Dendritic cell treated with granulocyte-macrophage colony-stimulating factor and Interleukin-4, amounts not matched to agents 40 ng/mL and 50 ng/mL, for 4 days (primary cell): ENCODE measurements at regions of chr19 and their contacts with region 1.

Region 1: DNA sequence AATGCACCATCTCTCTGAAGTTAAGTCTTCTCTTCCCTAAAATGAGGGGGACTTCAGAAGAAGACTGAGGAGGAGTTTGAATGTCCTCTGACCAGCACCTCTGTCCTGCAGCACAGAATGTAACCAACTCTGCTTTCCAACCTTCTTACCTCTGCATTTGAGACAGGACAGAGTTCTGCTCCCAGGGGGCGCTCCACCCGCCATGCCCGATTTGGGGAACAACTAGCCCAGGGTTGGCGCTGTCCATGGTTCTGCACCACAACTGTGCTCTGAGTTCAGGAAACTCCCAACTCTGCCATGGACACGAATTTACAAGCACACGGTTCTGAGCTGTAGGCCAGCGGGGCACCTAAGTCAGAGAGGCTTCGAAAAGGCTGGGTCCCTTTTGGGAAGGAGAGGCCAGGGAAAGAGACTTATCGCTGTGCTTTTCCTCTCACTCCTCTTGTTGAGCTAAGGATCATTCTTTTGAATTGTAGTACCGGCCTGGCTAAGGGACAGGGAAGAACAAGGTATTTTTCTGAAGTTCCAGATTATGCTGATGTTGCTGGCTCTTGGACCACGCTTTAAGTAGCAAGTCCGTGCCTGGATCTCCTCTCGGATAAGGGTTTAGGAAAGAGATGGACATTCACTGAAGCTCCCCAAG is 22.2 kb downstream of the SIGLEC5 start:
- H3K4me3 Mint-ChIP-seq: no peak overlapping the region
- H3K27ac Mint-ChIP-seq: no peak overlapping the region
- H3K4me1 Mint-ChIP-seq: peaks cover 15% of the 10 kb centered on the region
- H3K27me3 Mint-ChIP-seq: peaks cover 34% of the 10 kb centered on the region

Region 2: DNA sequence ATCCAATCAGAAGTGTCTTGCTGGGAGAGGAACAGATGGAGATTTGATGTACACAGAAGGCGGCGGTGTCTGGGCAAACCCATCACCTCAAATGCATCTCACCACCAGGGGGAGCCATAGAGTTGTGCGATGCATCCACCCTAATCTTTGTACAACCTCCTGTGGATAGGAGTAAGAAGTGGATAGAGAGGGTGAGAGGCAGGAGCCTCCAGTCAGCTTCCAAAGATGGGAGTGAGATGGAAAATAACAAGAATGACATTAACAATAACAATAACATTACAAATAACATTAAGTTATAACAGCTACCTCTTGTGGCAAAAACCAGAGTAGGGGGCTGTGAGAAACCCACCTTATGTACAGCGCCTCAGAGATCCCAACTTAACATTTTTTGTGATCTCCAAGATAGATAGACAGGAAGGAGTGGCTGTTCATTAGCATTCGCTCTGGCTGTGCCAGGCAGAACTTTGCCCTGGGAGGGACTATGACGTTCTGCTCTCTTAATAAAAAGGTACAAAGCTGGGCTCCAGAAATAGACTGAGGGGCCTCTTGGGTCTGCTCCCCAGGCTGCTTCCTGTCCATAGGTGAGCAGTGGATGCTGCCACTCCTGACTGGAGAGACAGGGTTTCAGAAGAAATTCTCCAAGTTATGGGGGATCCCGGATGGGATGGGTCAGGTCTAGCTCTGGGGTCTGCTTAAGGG is 134.9 kb before region 1 on chr19:
- intact Hi-C with region 1: loop called (anchors 5 kb)
- H3K4me3 Mint-ChIP-seq: no peak overlapping the region
- H3K27ac Mint-ChIP-seq: no peak overlapping the region
- H3K4me1 Mint-ChIP-seq: peaks cover 23% of the 10 kb centered on the region
- H3K27me3 Mint-ChIP-seq: peaks cover 20% of the 10 kb centered on the region

Region 3: DNA sequence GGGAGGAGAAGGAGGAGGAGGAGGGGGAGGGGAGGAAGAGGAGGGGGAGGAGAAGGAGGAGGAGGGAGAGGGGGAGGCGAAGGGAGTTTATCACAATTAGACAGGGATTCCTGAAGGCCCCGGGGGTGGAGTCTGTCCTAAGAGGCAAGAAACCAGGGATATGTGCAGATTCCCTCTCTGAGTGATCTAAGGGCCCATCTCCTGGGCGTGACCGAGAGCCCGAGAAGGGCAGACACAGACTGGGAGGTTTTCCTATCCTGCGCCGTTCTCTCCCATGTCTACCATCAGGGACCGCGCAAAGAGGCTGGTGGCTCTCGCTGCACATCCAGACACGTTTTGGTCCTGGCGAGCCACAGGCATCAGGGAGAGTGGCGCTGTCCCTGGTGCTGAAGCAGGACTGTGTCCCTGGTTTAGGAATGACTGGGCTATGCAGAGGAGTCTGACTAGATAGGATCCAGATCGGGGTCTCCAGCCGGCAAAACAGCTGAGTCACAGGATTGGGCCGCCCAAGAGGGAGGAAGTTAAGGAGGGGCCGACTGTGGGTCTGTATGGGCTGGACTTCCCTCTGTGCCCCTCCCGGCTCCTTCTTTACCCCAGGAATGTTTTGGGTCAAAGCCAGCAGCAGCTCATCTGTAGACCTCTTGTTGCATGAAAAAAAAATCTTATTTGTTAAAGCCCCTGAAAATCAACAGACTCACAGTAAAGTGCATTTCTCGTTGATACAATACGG is 54.9 kb before region 1 on chr19:
- intact Hi-C with region 1: loop called (anchors 5 kb)
- H3K4me3 Mint-ChIP-seq: no peak overlapping the region
- H3K27ac Mint-ChIP-seq: no peak overlapping the region
- H3K4me1 Mint-ChIP-seq: peaks cover 32% of the 10 kb centered on the region
- H3K27me3 Mint-ChIP-seq: peaks cover 66% of the 10 kb centered on the region

Region 4: DNA sequence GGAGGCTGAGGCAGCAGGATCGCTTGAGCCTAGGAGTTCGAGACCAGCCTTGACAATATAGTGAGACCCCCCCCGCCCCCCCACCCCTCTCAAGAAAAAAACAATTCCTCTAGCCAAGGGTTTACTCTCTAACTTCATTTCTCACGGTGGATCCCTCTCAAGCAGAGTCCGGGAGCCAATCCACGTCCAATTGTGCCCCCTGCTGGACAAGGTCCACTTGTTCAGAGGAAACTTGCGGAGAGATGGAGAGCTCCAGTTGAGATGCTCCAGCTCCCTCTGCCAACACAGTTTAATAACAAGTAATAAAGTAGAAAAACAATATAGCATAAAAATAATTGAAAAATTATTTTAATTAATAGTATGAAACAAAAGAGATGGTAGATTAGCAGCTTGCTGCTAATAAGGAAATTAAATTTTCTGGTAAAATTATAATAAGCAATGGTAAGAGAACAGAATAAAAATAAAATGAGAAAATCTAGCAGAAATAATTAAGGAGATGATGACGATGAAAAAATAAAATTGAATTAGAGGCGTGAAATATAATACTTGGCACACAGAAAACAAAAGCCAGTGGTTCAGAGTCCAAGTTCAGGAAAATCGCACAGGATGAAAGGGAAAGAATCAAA is 53.0 kb after region 1 on chr19:
- intact Hi-C with region 1: loop called (anchors 1 kb)
- H3K4me3 Mint-ChIP-seq: no peak overlapping the region
- H3K27ac Mint-ChIP-seq: no peak overlapping the region
- H3K4me1 Mint-ChIP-seq: peaks cover 36% of the 10 kb centered on the region
- H3K27me3 Mint-ChIP-seq: peaks cover 51% of the 10 kb centered on the region